Mammary epithelial cell (primary cell): ENCODE measurements at regions of chr1 and their contacts with region 1.

Region 1: DNA sequence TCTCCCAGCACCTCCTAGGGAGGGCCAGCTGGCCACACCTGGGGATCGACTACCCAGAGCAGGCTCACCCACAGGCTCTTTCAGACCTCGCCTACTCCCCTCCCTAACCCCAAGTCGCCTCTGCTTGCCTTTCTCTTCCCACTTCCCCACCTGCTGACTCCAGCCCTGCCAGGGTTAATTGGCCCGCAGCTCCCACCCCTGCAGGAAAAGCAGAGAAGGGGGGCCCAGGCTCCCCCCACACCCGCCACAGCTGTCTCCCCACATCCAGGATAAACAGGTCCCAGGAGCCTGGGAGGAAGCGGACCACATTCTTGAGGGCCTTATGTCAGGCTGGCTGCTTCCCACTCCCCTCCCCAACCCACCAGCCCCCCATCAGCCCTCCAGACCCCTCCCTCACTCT is 45.0 kb downstream of the TAS1R2 start:
- DNase-seq: no peak
- H3K4me3 ChIP-seq: no peak overlapping the region
- H3K27ac ChIP-seq: no peak overlapping the region
- H3K4me1 ChIP-seq: no peaks in the 10 kb centered on the region
- H3K27me3 ChIP-seq: no peaks in the 10 kb centered on the region
- CTCF ChIP-seq: no peak

Region 2: GRCh38 chr1:18703041-18703641 is 111.3 kb before region 1 on chr1:
- CTCF ChIA-PET with region 1: no interaction called
- dilution Hi-C with region 1: loop called (anchors 5 kb)
- in situ Hi-C with region 1: no loop called
- intact Hi-C with region 1: no loop called
- DNase-seq: peak; percentile 50
- H3K4me3 ChIP-seq: peak overlapping the region in 1 of 3 experiments; percentile 20
- H3K27ac ChIP-seq: no peak overlapping the region
- H3K4me1 ChIP-seq: no peaks in the 10 kb centered on the region
- H3K27me3 ChIP-seq: peaks cover 2% of the 10 kb centered on the region
- CTCF ChIP-seq: no peak

Region 3: GRCh38 chr1:18761948-18762850 is 52.2 kb before region 1 on chr1:
- CTCF ChIA-PET with region 1: no interaction called
- dilution Hi-C with region 1: no loop called
- in situ Hi-C with region 1: no loop called
- intact Hi-C with region 1: no loop called
- DNase-seq: no peak
- H3K4me3 ChIP-seq: no peak overlapping the region
- H3K27ac ChIP-seq: no peak overlapping the region
- H3K4me1 ChIP-seq: no peaks in the 10 kb centered on the region
- H3K27me3 ChIP-seq: peaks cover 8% of the 10 kb centered on the region
- CTCF ChIP-seq: no peak